B cell (primary cell): ENCODE measurements at regions of chr11 and their contacts with region 1.

Region 1: GRCh38 chr11:62645956-62646824 is at the start of gene GANAB:
- DNase-seq: peak; percentile 97
- ATAC-seq: peak; percentile 99
- H3K4me3 ChIP-seq: peak within 1 kb of the TSS; percentile 54 to 98 (median 90)
- H3K4me3 Mint-ChIP-seq: peak within 1 kb of the TSS; percentile 97
- H3K27ac ChIP-seq: peak within 1 kb of the TSS; percentile 75 to 89
- H3K27ac Mint-ChIP-seq: peak within 1 kb of the TSS; percentile 95
- H3K4me1 ChIP-seq: peaks cover 14 to 21% of the 10 kb centered on the region in 2 donors
- H3K4me1 Mint-ChIP-seq: peaks cover 26% of the 10 kb centered on the region
- H3K27me3 ChIP-seq: no peaks in the 10 kb centered on the region
- H3K27me3 Mint-ChIP-seq: no peaks in the 10 kb centered on the region
- CTCF ChIP-seq: no peak
- total RNA-seq, gene GANAB: 190 and 204 TPM in 2 replicates

Region 2: DNA sequence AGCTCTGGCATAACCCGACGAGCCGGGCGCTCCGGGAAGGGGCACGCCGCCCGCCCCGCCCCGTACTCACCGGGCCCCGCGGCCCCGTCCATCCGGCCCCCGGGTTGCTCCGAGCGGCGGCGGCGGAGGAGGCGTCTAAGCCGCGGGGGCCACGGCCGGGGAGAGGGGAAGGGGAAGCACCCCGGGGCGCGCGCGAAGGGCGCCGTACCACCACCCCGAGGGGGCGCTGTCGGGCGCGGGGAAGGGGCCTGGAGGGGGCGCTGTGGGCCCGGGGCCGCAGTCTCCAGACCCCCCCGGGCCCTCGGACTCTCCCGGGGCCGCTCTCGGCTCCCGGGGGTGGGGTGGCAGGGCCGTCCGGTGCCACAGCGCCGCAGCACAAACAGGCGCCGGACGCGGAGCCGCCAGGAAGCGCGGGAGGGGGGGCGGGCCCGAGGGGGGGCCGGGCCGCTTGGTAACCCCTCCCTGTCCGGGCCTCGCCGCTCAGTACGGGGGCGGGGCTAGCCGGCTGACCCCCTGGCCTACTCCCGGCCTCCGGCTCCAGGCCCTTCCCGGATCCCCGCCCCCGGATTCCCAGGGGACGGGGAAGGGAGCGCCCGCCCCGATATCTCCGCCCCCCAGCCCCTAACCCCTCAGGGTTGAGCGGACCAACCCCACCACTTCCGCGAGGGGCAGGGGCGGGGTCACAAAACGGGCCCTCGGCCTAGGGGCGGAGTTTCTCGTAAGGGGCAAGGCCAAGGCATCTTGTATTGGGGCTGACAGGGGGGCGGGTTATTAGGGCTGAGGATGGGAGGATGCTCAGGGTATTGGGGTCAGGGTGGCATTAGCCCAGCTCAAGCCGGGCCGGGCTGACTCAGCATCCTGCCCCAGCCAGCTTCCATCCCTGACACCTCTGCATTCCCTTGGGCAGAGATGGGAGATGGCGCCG is 33.6 kb before region 1 on chr11 and contains the starts of genes EML3 and ROM1:
- CTCF ChIA-PET with region 1: interaction called, 10 read pairs
- POLR2A ChIA-PET with region 1: no interaction called
- intact Hi-C with region 1: loop called (anchors 2 kb)
- DNase-seq: peak; percentile 92
- ATAC-seq: peak; percentile 79
- H3K4me3 ChIP-seq: peak within 1 kb of the TSS; percentile 70 to 84 (median 75)
- H3K4me3 Mint-ChIP-seq: peak within 1 kb of the TSS; percentile 97
- H3K27ac ChIP-seq: peak within 1 kb of the TSS; percentile 76 to 96
- H3K27ac Mint-ChIP-seq: peak within 1 kb of the TSS; percentile 99
- H3K4me1 ChIP-seq: peaks cover 10 to 25% of the 10 kb centered on the region in 2 donors
- H3K4me1 Mint-ChIP-seq: peaks cover 25% of the 10 kb centered on the region
- H3K27me3 ChIP-seq: no peaks in the 10 kb centered on the region
- H3K27me3 Mint-ChIP-seq: no peaks in the 10 kb centered on the region
- CTCF ChIP-seq: peak; percentile 99
- total RNA-seq, gene EML3: 127 and 135 TPM in 2 replicates
- total RNA-seq, gene ROM1: 0.68 and 2.0 TPM in 2 replicates

Region 3: GRCh38 chr11:62621567-62622470 is 24.4 kb before region 1 on chr11 and contains the start of gene B3GAT3:
- CTCF ChIA-PET with region 1: interaction called, 5 read pairs
- POLR2A ChIA-PET with region 1: interaction called, 9 read pairs
- intact Hi-C with region 1: loop called (anchors 1 kb)
- DNase-seq: peak; percentile 99
- ATAC-seq: peak; percentile 92
- H3K4me3 ChIP-seq: peak within 1 kb of the TSS; percentile 80 to 93 (median 88)
- H3K4me3 Mint-ChIP-seq: peak within 1 kb of the TSS; percentile 98
- H3K27ac ChIP-seq: peak within 1 kb of the TSS; percentile 88 to 98
- H3K27ac Mint-ChIP-seq: peak within 1 kb of the TSS; percentile 95
- H3K4me1 ChIP-seq: peaks cover 11 to 19% of the 10 kb centered on the region in 2 donors
- H3K4me1 Mint-ChIP-seq: peaks cover 23% of the 10 kb centered on the region
- H3K27me3 ChIP-seq: no peaks in the 10 kb centered on the region
- H3K27me3 Mint-ChIP-seq: no peaks in the 10 kb centered on the region
- CTCF ChIP-seq: no peak
- total RNA-seq, gene B3GAT3: 63.1 and 66.6 TPM in 2 replicates

Region 4: DNA sequence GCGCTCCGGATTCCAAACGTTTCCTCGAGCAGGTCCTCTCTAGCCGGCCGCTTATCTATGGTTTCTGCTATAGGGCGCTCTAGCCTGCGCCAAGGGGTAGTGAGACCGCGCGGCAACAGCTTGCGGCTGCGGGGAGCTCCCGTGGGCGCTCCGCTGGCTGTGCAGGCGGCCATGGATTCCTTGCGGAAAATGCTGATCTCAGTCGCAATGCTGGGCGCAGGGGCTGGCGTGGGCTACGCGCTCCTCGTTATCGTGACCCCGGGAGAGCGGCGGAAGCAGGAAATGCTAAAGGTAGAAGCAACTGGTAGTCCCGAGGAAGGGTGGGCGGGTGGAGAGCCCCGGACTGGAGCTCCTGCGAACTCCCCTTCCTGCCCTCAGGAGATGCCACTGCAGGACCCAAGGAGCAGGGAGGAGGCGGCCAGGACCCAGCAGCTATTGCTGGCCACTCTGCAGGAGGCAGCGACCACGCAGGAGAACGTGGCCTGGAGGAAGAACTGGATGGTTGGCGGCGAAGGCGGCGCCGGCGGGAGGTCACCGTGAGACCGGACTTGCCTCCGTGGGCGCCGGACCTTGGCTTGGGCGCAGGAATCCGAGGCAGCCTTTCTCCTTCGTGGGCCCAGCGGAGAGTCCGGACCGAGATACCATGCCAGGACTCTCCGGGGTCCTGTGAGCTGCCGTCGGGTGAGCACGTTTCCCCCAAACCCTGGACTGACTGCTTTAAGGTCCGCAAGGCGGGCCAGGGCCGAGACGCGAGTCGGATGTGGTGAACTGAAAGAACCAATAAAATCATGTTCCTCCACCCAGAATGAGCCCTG is 25.6 kb after region 1 on chr11 and contains the starts of genes LBHD1 and UQCC3:
- CTCF ChIA-PET with region 1: interaction called, 3 read pairs
- POLR2A ChIA-PET with region 1: interaction called, 21 read pairs
- intact Hi-C with region 1: loop called (anchors 1 kb)
- DNase-seq: peak; percentile 86
- ATAC-seq: peak; percentile 77
- H3K4me3 ChIP-seq: peak within 1 kb of the TSS; percentile 85 to 97 (median 87)
- H3K4me3 Mint-ChIP-seq: peak within 1 kb of the TSS; percentile 100
- H3K27ac ChIP-seq: peak within 1 kb of the TSS; percentile 56 to 71
- H3K27ac Mint-ChIP-seq: peak within 1 kb of the TSS; percentile 97
- H3K4me1 ChIP-seq: peaks cover 21 to 36% of the 10 kb centered on the region in 2 donors
- H3K4me1 Mint-ChIP-seq: peaks cover 48% of the 10 kb centered on the region
- H3K27me3 ChIP-seq: no peaks in the 10 kb centered on the region
- H3K27me3 Mint-ChIP-seq: no peaks in the 10 kb centered on the region
- CTCF ChIP-seq: no peak
- total RNA-seq, gene LBHD1: 32.5 and 33.3 TPM in 2 replicates
- total RNA-seq, gene UQCC3: 6.5 and 8.9 TPM in 2 replicates

Region 5: DNA sequence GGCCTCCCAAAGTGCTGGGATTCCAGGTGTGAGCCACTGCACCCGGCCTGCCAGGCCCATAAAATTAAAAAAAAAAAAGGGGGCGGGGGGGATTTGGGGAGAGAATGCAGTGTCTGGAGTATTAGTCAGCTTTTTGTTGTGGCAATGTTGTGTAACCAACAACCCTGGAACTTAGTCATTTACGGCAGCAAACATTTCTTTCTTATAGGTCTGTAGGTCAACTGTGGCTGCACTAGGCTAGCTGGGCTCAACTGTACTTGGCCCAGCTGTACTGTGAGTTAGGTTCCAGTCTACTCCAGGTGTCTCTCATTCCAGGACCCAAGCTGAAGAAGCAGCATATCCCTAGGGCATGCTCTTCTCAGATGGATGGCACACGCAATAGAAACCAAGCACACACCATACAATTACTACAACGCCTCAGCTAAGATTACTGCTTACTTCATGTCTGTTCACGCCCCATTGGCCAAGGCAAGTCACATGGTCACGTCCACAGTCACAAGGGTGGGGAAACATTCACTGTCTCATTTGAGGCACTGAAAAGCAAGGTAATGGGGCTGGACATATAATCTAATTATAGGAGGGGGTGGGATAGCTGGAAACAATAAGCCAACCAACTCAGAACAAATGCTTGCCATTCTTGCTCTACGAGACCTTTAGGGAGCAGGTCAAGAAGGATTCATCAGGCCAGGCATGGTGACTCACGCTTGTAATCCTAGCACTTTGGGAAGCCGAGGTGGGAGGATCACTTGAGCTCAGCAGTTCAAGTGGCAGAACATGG is 1156.6 kb after region 1 on chr11:
- CTCF ChIA-PET with region 1: no interaction called
- POLR2A ChIA-PET with region 1: no interaction called
- intact Hi-C with region 1: no loop called
- DNase-seq: no peak
- ATAC-seq: no peak
- H3K4me3 ChIP-seq: no peak overlapping the region
- H3K4me3 Mint-ChIP-seq: no peak overlapping the region
- H3K27ac ChIP-seq: no peak overlapping the region
- H3K27ac Mint-ChIP-seq: no peak overlapping the region
- H3K4me1 ChIP-seq: no peaks in the 10 kb centered on the region
- H3K4me1 Mint-ChIP-seq: no peaks in the 10 kb centered on the region
- H3K27me3 ChIP-seq: peaks cover 0 to 3% (median 0%) of the 10 kb centered on the region in 4 experiments
- H3K27me3 Mint-ChIP-seq: peaks cover 7% of the 10 kb centered on the region
- CTCF ChIP-seq: no peak